Endothelial cell of umbilical vein (primary cell): ENCODE measurements at regions of chr18 and their contacts with region 1.

Region 1: DNA sequence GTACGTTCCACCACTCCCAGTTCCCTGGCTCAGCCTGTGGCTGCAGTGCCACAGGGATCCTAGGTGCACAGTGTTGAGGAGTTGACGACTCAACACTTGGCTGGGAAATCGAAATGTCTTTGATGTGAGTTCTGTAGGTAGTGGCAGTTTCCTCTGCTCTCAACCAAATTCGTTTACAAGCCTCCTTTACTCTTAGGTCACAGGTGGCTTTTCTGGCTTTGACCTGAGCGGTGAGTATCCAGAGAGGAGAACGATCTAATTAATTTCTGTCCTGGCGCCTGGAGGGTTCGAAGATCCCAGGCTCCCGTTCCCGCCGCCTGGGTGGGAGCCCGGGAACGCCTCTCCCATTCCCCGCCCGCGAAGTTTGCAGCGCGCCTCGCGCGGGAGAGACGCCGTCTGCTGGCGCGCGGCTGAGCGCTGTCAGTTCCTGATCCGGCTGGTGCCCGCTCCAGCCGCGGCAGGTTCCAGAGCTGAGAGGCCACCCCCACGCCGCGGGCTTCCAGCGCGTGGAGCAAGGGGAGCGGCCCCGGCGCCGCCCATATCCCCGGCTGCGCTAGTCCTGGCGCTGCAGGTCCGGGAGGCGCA is at the start of gene LAMA3:
- DNase-seq: peak; percentile 53
- H3K4me3 ChIP-seq: peak within 1 kb of the TSS; percentile 36 to 76 (median 50)
- H3K27ac ChIP-seq: no peak within 1 kb of the TSS
- H3K4me1 ChIP-seq: peaks cover 13% of the 10 kb centered on the region
- H3K27me3 ChIP-seq: no peaks in the 10 kb centered on the region
- CTCF ChIP-seq: peak; percentile 7 to 33
- POLR2A ChIP-seq: no peak
- total RNA-seq, gene LAMA3: 7.1 and 12.3 TPM in 2 replicates

Region 2: GRCh38 chr18:23650968-23651927 is 37.9 kb before region 1 on chr18:
- CTCF ChIA-PET with region 1: no interaction called
- POLR2A ChIA-PET with region 1: no interaction called
- dilution Hi-C with region 1: no loop called
- intact Hi-C with region 1: loop called (anchors 5 kb)
- DNase-seq: peak; percentile 51
- H3K4me3 ChIP-seq: no peak overlapping the region
- H3K27ac ChIP-seq: no peak overlapping the region
- H3K4me1 ChIP-seq: peaks cover 10% of the 10 kb centered on the region
- H3K27me3 ChIP-seq: peaks cover 0 to 4% of the 10 kb centered on the region in 2 experiments
- CTCF ChIP-seq: no peak
- POLR2A ChIP-seq: no peak